ENCODE measurements at regions of chrX and their contacts with region 1.

Region 1: DNA sequence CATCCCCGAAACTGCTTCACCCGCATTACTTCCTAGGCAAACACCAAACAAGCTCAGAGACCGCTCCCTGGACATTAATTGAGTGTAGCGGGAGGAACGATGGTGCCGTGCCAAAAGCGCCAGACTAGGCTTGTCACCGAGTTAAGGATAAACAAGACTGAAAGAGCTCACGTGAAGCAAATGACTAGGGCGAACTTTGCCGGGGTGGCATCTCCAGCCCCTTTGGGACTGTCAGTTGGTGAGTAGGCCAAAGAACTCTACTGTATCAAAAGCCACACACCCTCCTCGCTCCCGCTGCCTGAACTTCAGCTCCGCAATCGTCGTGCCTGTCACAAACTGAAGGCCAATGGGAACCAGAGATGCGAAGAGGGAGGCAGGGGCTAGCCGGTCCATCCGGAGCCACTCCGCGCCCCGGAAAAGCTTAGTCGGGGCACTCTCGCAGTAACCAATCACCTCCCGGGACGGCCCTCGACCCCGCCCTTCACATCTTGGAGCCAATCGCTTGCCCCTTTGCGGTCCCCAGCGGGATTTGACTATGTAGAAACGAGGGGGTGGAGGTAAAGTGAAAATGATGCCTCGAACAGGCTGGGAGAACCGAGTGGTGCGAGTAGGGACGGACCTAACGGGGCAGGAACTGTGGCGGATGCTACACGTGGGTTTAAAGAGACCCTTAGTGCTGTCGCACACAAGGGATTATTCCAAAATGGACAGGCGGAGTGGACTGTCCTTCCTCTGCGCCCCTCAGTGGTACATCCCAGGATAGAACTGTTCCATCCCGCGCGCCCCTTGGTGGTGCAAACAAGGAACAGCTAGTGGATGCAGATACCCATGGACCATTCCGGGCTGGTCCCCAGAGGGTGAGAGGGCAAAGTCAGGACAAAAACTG is 37.1 kb upstream of the FAM156A start:
- DNase-seq: peak; percentile 94
- ATAC-seq: peak; percentile 95
- H3K4me3 ChIP-seq: peak overlapping the region; percentile 58 to 87 (median 73)
- H3K4me3 Mint-ChIP-seq: peak overlapping the region; percentile 97
- H3K27ac ChIP-seq: peak overlapping the region; percentile 90 to 91
- H3K27ac Mint-ChIP-seq: peak overlapping the region; percentile 99
- H3K4me1 ChIP-seq: peaks cover 18 to 25% of the 10 kb centered on the region in 2 donors
- H3K4me1 Mint-ChIP-seq: peaks cover 23% of the 10 kb centered on the region
- H3K27me3 ChIP-seq: no peaks in the 10 kb centered on the region
- H3K27me3 Mint-ChIP-seq: no peaks in the 10 kb centered on the region
- CTCF ChIP-seq: peak; percentile 58

Region 2: DNA sequence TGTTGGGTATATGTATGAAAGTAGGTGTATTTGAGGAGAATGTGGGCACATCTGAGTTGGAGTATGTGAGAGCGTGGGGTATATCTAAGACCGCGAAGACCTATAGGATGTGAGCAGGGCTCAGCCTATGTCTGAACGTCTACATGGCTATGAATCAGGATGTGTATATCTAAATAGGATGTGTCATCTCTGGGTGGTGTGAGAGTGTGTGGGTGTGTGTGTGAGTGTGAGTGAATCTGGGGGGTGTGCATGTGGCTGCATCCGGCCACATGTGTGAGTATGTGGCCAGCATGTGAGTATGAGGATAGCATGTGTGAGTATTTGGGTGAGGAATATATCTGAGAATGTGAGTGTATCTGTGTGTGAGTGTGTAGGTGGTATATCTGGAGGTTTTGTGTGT is 60.9 kb after region 1 on chrX:
- CTCF ChIA-PET with region 1: no interaction called
- POLR2A ChIA-PET with region 1: no interaction called
- intact Hi-C with region 1: no loop called
- DNase-seq: no peak
- ATAC-seq: no peak
- H3K4me3 ChIP-seq: no peak overlapping the region
- H3K4me3 Mint-ChIP-seq: no peak overlapping the region
- H3K27ac ChIP-seq: no peak overlapping the region
- H3K27ac Mint-ChIP-seq: no peak overlapping the region
- H3K4me1 ChIP-seq: no peaks in the 10 kb centered on the region
- H3K4me1 Mint-ChIP-seq: no peaks in the 10 kb centered on the region
- H3K27me3 ChIP-seq: no peaks in the 10 kb centered on the region
- H3K27me3 Mint-ChIP-seq: no peaks in the 10 kb centered on the region
- CTCF ChIP-seq: no peak

Region 3: DNA sequence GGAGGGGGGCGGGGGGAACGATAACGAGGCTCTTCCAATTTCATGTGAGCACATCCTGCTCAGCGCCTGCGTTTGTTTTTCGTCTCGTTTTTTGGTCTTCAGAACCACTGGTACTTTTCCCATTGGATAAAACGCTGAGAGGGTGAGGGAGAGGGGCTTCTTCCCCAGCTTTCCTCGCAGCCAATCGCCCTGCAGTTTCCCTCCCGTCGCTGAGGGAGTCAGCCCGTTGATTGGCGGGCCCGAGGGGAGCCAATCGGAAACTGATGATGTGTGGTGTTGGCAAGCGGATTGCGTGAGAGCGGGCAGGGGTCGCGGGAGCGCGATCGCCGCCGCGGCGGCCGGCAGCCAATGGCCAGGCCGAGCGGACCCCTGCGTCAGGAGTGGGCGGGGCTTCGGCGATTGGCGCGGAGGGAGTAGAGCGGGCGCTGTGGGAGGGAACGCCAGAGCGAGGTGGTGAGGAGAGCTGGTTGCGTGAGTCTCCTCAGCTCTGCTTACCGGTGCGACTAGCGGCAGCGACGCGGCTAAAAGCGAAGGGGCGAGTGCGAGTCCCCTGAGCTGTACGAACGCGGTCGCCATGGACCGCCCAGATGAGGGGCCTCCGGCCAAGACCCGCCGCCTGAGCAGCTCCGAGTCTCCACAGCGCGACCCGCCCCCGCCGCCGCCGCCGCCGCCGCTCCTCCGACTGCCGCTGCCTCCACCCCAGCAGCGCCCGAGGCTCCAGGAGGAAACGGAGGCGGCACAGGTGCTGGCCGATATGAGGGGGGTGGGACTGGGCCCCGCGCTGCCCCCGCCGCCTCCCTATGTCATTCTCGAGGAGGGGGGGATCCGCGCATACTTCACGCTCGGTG is 86.8 kb after region 1 on chrX and contains the start of gene TSPYL2:
- CTCF ChIA-PET with region 1: no interaction called
- POLR2A ChIA-PET with region 1: interaction called, 5 read pairs
- intact Hi-C with region 1: loop called (anchors 1 kb)
- DNase-seq: peak; percentile 95
- ATAC-seq: peak; percentile 88
- H3K4me3 ChIP-seq: peak within 1 kb of the TSS; percentile 61 to 69 (median 65)
- H3K4me3 Mint-ChIP-seq: peak within 1 kb of the TSS; percentile 90
- H3K27ac ChIP-seq: peak within 1 kb of the TSS; percentile 85
- H3K27ac Mint-ChIP-seq: peak within 1 kb of the TSS; percentile 96
- H3K4me1 ChIP-seq: peaks cover 9 to 17% of the 10 kb centered on the region in 2 donors
- H3K4me1 Mint-ChIP-seq: peaks cover 31% of the 10 kb centered on the region
- H3K27me3 ChIP-seq: no peaks in the 10 kb centered on the region
- H3K27me3 Mint-ChIP-seq: no peaks in the 10 kb centered on the region
- CTCF ChIP-seq: no peak
- total RNA-seq, gene TSPYL2: 112 and 126 TPM in 2 replicates

Region 4: DNA sequence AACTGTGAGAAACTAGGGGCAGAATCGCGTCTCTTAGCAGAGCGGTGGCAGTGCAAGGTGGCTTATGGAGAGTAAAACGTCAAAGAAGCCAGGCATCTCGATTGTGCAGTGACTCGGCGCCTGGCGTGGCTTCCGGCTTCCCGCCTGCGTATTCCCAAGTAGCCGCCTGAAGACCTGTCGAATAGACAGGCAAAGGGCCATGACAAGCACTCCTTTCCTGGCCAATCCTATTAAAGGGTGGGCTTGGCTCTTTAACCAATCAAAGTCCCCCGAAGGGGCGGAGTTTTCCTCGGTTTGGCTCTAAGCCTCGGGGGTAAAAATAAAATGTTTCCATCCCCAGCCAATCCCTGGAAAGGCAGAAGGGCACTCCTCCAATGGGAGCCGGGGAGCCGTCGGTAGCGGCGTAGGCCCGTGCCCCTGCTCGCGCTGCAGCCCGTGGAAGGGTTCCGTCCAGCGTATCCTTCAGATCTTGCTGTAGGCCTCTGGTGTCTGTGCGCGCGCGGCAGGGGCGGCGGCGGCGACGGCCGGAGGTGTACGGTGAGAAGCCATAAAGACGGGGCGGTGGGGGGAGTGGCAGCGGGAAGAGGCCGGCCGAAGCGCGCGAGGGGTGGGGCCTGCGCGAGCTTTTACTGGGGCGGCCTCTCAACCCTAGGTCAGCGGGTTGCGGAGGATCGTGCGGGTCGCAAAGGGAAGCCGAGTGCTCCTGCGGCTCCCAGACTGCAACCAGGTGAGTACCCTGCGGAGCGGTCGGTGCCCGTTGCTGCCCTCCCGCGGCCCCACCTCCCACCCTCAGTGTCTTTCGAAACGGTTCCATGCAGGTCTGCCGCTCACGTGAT is 98.6 kb after region 1 on chrX and contains the start of gene KANTR:
- CTCF ChIA-PET with region 1: interaction called, 4 read pairs
- POLR2A ChIA-PET with region 1: interaction called, 3 read pairs
- intact Hi-C with region 1: loop called (anchors 1 kb)
- DNase-seq: peak; percentile 88
- ATAC-seq: peak; percentile 82
- H3K4me3 ChIP-seq: peak within 1 kb of the TSS; percentile 51 to 72 (median 68)
- H3K4me3 Mint-ChIP-seq: peak within 1 kb of the TSS; percentile 91
- H3K27ac ChIP-seq: peak within 1 kb of the TSS; percentile 49 to 59
- H3K27ac Mint-ChIP-seq: peak within 1 kb of the TSS; percentile 91
- H3K4me1 ChIP-seq: peaks cover 6 to 15% of the 10 kb centered on the region in 2 donors
- H3K4me1 Mint-ChIP-seq: peaks cover 16% of the 10 kb centered on the region
- H3K27me3 ChIP-seq: no peaks in the 10 kb centered on the region
- H3K27me3 Mint-ChIP-seq: no peaks in the 10 kb centered on the region
- CTCF ChIP-seq: no peak
- total RNA-seq, gene KANTR: 26.8 and 32.6 TPM in 2 replicates

Region 5: GRCh38 chrX:53224860-53225797 is 229.8 kb after region 1 on chrX and contains the start of gene KDM5C:
- CTCF ChIA-PET with region 1: no interaction called
- POLR2A ChIA-PET with region 1: interaction called, 3 read pairs
- intact Hi-C with region 1: loop called (anchors 5 kb)
- DNase-seq: peak; percentile 93
- ATAC-seq: peak; percentile 88
- H3K4me3 ChIP-seq: peak within 1 kb of the TSS; percentile 65 to 100 (median 96)
- H3K4me3 Mint-ChIP-seq: peak within 1 kb of the TSS; percentile 96
- H3K27ac ChIP-seq: peak within 1 kb of the TSS; percentile 86 to 97
- H3K27ac Mint-ChIP-seq: peak within 1 kb of the TSS; percentile 98
- H3K4me1 ChIP-seq: peaks cover 31 to 34% of the 10 kb centered on the region in 2 donors
- H3K4me1 Mint-ChIP-seq: peaks cover 32% of the 10 kb centered on the region
- H3K27me3 ChIP-seq: no peaks in the 10 kb centered on the region
- H3K27me3 Mint-ChIP-seq: no peaks in the 10 kb centered on the region
- CTCF ChIP-seq: no peak
- total RNA-seq, gene KDM5C: 138 and 157 TPM in 2 replicates

Region 6: DNA sequence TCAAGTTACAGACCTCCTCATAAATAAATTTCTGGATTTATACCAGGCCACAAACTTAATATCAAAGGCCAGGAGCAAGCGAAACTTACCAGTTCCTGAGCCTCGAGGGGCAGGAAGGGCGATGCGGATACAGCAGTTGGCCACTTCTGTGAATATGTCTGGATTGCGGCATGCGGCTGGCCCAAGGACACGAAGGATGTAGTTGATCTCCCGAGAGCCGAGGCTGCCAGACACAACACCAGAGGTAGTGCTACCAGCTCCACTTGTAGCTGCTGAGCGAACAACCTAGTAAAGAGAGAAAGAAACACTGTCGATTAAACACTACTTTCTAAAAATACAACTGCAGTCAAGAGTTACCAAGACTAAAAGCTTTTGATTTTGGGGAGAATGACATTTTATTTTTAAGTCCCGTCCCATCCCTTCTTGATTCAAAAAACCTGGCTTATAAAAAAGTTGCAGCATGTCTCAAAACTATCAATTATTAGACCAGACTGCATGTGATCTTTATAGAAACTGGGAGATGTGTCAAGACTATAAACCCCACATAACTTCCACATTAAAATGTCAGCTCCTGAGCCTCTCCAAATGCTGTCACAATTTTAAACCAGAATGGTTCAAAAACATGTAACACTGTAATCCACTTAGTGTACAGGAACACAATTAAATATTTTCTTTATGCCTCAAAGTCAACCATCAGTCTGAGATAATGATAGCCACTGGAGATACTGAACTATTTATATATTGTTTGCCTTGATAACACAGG is 585.5 kb after region 1 on chrX:
- CTCF ChIA-PET with region 1: no interaction called
- POLR2A ChIA-PET with region 1: no interaction called
- intact Hi-C with region 1: no loop called
- DNase-seq: no peak
- ATAC-seq: no peak
- H3K4me3 ChIP-seq: no peak overlapping the region
- H3K4me3 Mint-ChIP-seq: no peak overlapping the region
- H3K27ac ChIP-seq: no peak overlapping the region
- H3K27ac Mint-ChIP-seq: no peak overlapping the region
- H3K4me1 ChIP-seq: no peaks in the 10 kb centered on the region
- H3K4me1 Mint-ChIP-seq: no peaks in the 10 kb centered on the region
- H3K27me3 ChIP-seq: no peaks in the 10 kb centered on the region
- H3K27me3 Mint-ChIP-seq: no peaks in the 10 kb centered on the region
- CTCF ChIP-seq: no peak